ENCODE measurements at regions of chr3 and their contacts with region 1.

Region 1: DNA sequence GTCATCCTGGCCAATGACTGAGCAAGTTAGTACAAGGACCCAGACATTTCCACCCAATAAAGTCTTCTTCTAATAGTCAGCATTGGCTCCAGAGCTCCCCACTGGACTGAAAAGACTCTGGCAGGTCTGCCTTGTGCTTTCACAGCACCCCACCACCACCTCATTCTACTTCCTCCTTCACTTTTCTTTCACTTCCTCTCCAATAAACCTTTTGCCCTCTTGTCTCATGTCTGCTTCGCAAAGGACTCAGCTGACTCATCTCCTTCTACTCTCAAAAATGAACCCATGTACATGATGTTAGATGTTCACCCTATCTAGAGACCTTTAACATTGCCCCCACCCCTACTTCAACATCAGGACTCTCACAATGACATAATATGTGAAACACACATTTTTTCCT is 181.0 kb upstream of the PPP2R3A start:
- DNase-seq: no peak
- H3K4me3 ChIP-seq: no peak overlapping the region
- CTCF ChIP-seq: no peak

Region 2: GRCh38 chr3:135018149-135018923 is 766.2 kb before region 1 on chr3:
- in situ Hi-C with region 1: no loop called
- DNase-seq: no peak
- H3K4me3 ChIP-seq: no peak overlapping the region
- CTCF ChIP-seq: no peak

Region 3: DNA sequence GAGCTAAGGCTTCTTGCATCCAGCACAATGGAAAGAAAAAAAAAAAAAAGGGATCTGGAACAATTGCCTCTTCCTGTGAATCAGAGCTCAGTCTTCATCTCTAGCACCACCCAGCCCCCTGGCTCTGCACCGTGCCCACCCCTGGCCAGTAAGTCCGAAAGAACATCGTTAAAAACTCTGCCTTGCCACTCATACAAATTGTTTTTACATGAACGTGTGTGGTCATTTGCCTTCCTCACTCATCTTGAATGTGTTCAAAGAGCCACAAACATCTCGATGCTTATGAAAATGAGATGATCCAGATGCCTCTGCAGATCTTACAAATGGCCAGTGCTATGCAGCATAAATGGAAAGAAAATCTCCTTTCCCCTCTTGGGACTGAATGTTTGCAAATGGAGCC is 219.0 kb before region 1 on chr3:
- in situ Hi-C with region 1: no loop called
- DNase-seq: no peak
- H3K4me3 ChIP-seq: no peak overlapping the region
- CTCF ChIP-seq: no peak

Region 4: DNA sequence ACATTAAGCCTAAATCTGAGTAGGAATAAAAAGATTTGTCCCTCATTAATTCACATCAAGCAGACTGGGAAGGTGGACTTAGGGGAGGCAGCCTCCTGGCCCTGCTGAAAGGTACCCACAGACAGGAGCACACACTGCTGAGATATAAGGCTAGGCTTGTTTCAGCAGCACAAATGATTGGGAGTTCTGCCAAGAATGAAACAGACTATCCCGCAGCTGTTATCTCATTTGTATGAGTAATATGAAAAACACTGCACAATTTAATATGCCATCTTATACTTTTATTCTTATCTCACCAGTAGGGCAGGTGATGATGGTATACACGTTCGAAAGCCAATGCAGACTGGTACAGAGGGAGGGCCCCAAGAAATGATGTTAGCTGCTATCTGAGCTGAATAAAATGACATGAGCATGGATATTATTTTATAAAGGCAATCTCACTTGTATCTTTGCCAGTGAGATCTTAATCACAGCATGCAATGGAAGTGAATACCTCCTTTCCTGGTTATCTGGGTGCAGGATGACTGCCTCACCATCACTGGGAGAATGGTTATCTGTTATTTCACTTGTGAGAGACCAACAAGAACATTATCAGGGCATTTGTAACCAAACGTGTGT is 77.7 kb before region 1 on chr3:
- in situ Hi-C with region 1: loop called (anchors 5 kb)
- DNase-seq: no peak
- H3K4me3 ChIP-seq: no peak overlapping the region
- CTCF ChIP-seq: no peak

Region 5: GRCh38 chr3:135851201-135852081 is 66.9 kb after region 1 on chr3:
- in situ Hi-C with region 1: loop called (anchors 10 kb)
- DNase-seq: peak; percentile 15
- H3K4me3 ChIP-seq: no peak overlapping the region
- CTCF ChIP-seq: no peak

Measured in astrocyte of the cerebellum (primary cell).